Heart right ventricle (tissue), 16 donors: ENCODE measurements at regions of chr3 and their contacts with region 1.

Region 1: GRCh38 chr3:141353652-141354495 is 14.4 kb upstream of the ZBTB38 start:
- DNase-seq: no peak
- ATAC-seq: peak in 4 of 8 donors; percentile 27 to 88 (median 66)
- H3K4me3 ChIP-seq: no peak overlapping the region
- H3K27ac ChIP-seq: no peak overlapping the region
- H3K4me1 ChIP-seq: no peaks in the 10 kb centered on the region
- H3K27me3 ChIP-seq: no peaks in the 10 kb centered on the region
- CTCF ChIP-seq: no peak

Region 2: GRCh38 chr3:141311496-141312353 is 42.1 kb before region 1 on chr3:
- intact Hi-C with region 1: loop called in 4 of 10 experiments (anchors 5 kb)
- DNase-seq: peak; percentile 98 to 99
- ATAC-seq: peak; percentile 97 to 100 (median 99)
- H3K4me3 ChIP-seq: peak overlapping the region; percentile 42 to 79 (median 72)
- H3K27ac ChIP-seq: peak overlapping the region; percentile 19 to 89 (median 86)
- H3K4me1 ChIP-seq: peaks cover 4 to 26% (median 16%) of the 10 kb centered on the region in 9 donors
- H3K27me3 ChIP-seq: no peaks in the 10 kb centered on the region
- CTCF ChIP-seq: peak; percentile 57 to 93 (median 80)

Region 3: DNA sequence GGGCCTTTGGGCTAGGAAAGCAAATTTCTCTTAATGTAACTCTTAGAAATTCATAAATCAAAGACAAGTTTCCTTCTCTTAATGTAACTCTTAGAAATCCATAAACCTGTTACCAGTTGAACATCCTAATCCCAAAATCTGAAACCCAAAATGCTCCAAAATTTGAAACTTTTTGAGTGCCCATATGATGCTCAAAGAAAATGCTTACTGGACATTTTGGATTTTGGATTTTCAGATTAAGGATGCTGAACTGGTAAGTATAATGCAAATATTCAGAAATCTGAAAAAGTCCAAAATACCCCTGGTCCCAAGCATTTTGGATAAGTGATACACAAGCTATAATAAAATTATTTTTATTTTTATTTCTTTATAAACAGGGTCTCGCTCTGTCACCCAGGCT is 37.0 kb before region 1 on chr3:
- intact Hi-C with region 1: loop called in 3 of 10 experiments (anchors 5 kb)
- DNase-seq: no peak
- ATAC-seq: no peak
- H3K4me3 ChIP-seq: no peak overlapping the region
- H3K27ac ChIP-seq: no peak overlapping the region
- H3K4me1 ChIP-seq: peaks cover 0 to 22% (median 8%) of the 10 kb centered on the region in 9 donors
- H3K27me3 ChIP-seq: no peaks in the 10 kb centered on the region
- CTCF ChIP-seq: no peak